SK-N-SH (cell line): ENCODE measurements at regions of chr15 and their contacts with region 1.

Region 1: DNA sequence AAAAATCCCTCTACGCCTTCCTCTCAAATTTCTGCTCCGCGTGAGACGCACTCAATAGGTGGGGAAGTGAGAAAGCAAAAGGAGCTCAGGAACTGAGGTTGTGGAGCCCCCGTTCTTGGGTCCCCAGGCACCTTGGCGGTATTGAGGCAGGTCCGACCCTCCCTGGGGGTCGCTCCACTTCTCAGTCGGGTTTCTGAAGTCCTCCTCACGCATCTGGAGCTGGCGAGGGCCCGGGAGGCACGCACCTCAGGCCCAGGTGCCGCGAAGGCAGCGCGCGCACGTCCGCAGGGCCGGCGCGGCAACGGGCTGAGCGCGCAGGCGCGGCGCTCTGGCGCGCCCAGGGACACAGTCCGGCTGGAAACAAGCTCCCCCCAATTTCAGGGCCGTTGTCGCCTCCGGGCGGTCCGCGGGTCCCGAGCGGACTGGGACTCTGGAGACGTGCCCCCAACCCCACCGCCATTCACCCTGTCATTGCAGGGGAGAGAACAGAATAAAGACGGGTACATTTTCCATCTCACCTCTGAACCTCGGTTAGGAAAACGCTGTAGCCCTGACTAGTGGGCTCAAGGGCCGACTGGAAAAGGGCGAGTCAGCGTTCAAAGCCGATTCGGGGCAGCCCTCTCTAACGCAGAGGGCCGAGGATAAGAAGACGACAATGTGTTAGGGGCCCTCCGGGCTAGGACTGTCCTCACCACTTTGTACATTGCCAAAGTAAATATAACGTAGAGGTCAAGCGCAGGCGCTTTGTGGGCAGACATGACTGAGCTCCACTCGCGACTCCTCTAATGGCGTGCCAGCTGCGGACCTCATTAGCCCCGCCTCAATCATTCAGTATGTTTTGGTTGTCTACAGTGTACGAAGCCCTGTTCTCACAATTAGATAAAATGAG is at the start of gene ZNF770:
- DNase-seq: peak; percentile 92
- H3K4me3 ChIP-seq: peak within 1 kb of the TSS; percentile 96 to 99
- H3K27ac ChIP-seq: peak within 1 kb of the TSS; percentile 90 to 99
- H3K4me1 ChIP-seq: peaks cover 9 to 12% of the 10 kb centered on the region in 2 experiments; a peak in 3 of 4 replicates
- H3K27me3 ChIP-seq: no peaks in the 10 kb centered on the region
- CTCF ChIP-seq: no peak
- EP300 ChIP-seq: peak in 1 of 2 experiments; percentile 26; a peak in 2 of 4 replicates
- RAD21 ChIP-seq: no peak
- polyA plus RNA-seq, gene ZNF770: 3.8 and 5.3 TPM in 2 replicates

Region 2: GRCh38 chr15:34969340-34970097 is 18.7 kb before region 1 on chr15 and contains the start of gene AQR:
- CTCF ChIA-PET with region 1: interaction called, 37 read pairs
- POLR2A ChIA-PET with region 1: interaction called, 39 read pairs
- DNase-seq: peak; percentile 91
- H3K4me3 ChIP-seq: peak within 1 kb of the TSS; percentile 92 to 95
- H3K27ac ChIP-seq: peak within 1 kb of the TSS; percentile 74 to 78; a peak in 3 of 4 replicates
- H3K4me1 ChIP-seq: peaks cover 2 to 3% of the 10 kb centered on the region in 2 experiments; a peak in 3 of 4 replicates
- H3K27me3 ChIP-seq: no peaks in the 10 kb centered on the region
- CTCF ChIP-seq: peak; percentile 78
- EP300 ChIP-seq: peak; percentile 11 to 44; a peak in 1 of 4 replicates
- RAD21 ChIP-seq: peak; percentile 45
- polyA plus RNA-seq, gene AQR: 11.6 and 19.6 TPM in 2 replicates

Region 3: GRCh38 chr15:35000511-35000910 is 12.3 kb after region 1 on chr15:
- CTCF ChIA-PET with region 1: interaction called, 5 read pairs
- POLR2A ChIA-PET with region 1: interaction called, 10 read pairs
- DNase-seq: no peak
- H3K4me3 ChIP-seq: no peak overlapping the region
- H3K27ac ChIP-seq: no peak overlapping the region
- H3K4me1 ChIP-seq: no peaks in the 10 kb centered on the region
- H3K27me3 ChIP-seq: no peaks in the 10 kb centered on the region
- CTCF ChIP-seq: no peak
- EP300 ChIP-seq: no peak
- RAD21 ChIP-seq: no peak

Region 4: GRCh38 chr15:35181538-35181937 is 193.3 kb after region 1 on chr15:
- CTCF ChIA-PET with region 1: no interaction called
- POLR2A ChIA-PET with region 1: no interaction called
- DNase-seq: no peak
- H3K4me3 ChIP-seq: no peak overlapping the region
- H3K27ac ChIP-seq: no peak overlapping the region
- H3K4me1 ChIP-seq: no peaks in the 10 kb centered on the region; a peak in 1 of 4 replicates
- H3K27me3 ChIP-seq: no peaks in the 10 kb centered on the region
- CTCF ChIP-seq: no peak
- EP300 ChIP-seq: no peak
- RAD21 ChIP-seq: no peak